CD8-positive, alpha-beta T cell (primary cell): ENCODE measurements at regions of chr14 and their contacts with region 1.

Region 1: DNA sequence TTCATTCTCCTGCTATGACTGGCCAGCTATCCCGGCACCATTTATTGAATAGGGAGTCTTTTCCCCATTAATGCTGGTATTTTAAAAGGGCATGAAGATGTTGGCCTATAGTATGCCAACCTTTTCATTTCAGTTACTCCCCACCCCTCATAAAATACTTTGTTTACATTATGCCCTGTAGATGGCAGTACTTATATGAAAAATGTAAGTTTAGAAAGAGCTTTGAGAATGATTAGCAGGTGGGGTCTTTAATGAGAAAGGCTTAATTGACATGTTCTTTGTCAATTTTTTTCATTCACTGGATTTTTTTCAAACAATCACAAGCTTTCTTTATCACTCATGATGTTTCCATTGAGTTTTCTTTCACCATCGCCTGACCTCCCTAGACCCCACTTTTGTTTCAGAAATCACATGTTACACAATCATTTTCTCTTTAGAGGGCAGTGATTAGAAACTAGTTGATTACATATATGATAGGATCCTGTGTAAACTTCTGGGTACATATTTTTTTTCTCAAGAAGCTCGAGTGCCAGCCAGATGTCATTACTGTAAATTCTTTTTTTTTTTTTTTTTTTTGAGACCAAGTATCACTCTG is 62.6 kb upstream of the PSMA6 start:
- DNase-seq: peak in 2 of 9 experiments; percentile 32 to 59
- ATAC-seq: peak; percentile 58
- H3K4me3 ChIP-seq: no peak overlapping the region
- H3K4me3 Mint-ChIP-seq: no peak overlapping the region
- H3K27ac ChIP-seq: no peak overlapping the region
- H3K27ac Mint-ChIP-seq: no peak overlapping the region
- H3K4me1 ChIP-seq: peaks cover 7% of the 10 kb centered on the region
- H3K4me1 Mint-ChIP-seq: peaks cover 19% of the 10 kb centered on the region
- H3K27me3 ChIP-seq: no peaks in the 10 kb centered on the region
- H3K27me3 Mint-ChIP-seq: no peaks in the 10 kb centered on the region
- CTCF ChIP-seq: peak; percentile 45

Region 2: DNA sequence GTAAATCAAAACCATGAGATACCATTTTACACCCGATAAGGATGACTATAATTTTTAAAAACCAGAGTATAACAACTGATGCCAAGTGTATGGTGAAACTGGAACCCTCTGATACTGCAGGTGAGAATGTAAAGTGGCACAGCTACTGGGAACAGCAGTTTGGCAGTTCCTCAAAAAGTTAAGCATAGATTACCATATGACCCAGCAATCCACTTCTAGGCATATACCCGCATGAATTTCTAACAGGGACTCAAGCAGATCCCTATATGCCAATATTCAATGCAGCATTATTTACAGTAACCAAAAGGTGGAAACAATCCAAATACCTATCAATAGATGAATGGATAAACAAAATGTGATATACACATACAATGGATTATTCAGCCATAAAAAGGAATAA is 411.8 kb before region 1 on chr14:
- CTCF ChIA-PET with region 1: no interaction called
- POLR2A ChIA-PET with region 1: no interaction called
- intact Hi-C with region 1: no loop called
- DNase-seq: no peak
- ATAC-seq: no peak
- H3K4me3 ChIP-seq: no peak overlapping the region
- H3K4me3 Mint-ChIP-seq: no peak overlapping the region
- H3K27ac ChIP-seq: no peak overlapping the region
- H3K27ac Mint-ChIP-seq: no peak overlapping the region
- H3K4me1 ChIP-seq: no peaks in the 10 kb centered on the region
- H3K4me1 Mint-ChIP-seq: peaks cover 12% of the 10 kb centered on the region
- H3K27me3 ChIP-seq: no peaks in the 10 kb centered on the region
- H3K27me3 Mint-ChIP-seq: no peaks in the 10 kb centered on the region
- CTCF ChIP-seq: no peak

Region 3: GRCh38 chr14:35140718-35141581 is 88.6 kb before region 1 on chr14:
- CTCF ChIA-PET with region 1: interaction called, 11 read pairs
- POLR2A ChIA-PET with region 1: no interaction called
- intact Hi-C with region 1: loop called (anchors 2 to 5 kb)
- DNase-seq: peak in 2 of 9 experiments; percentile 40 to 44
- ATAC-seq: peak; percentile 67
- H3K4me3 ChIP-seq: no peak overlapping the region
- H3K4me3 Mint-ChIP-seq: no peak overlapping the region
- H3K27ac ChIP-seq: no peak overlapping the region
- H3K27ac Mint-ChIP-seq: peak overlapping the region; percentile 67
- H3K4me1 ChIP-seq: no peaks in the 10 kb centered on the region
- H3K4me1 Mint-ChIP-seq: peaks cover 19% of the 10 kb centered on the region
- H3K27me3 ChIP-seq: no peaks in the 10 kb centered on the region
- H3K27me3 Mint-ChIP-seq: no peaks in the 10 kb centered on the region
- CTCF ChIP-seq: peak; percentile 83

Region 4: GRCh38 chr14:35161231-35161630 is 68.4 kb before region 1 on chr14:
- CTCF ChIA-PET with region 1: no interaction called
- POLR2A ChIA-PET with region 1: no interaction called
- intact Hi-C with region 1: no loop called
- DNase-seq: peak in 4 of 9 experiments; percentile 13 to 78 (median 47)
- ATAC-seq: peak; percentile 62
- H3K4me3 ChIP-seq: no peak overlapping the region
- H3K4me3 Mint-ChIP-seq: no peak overlapping the region
- H3K27ac ChIP-seq: no peak overlapping the region
- H3K27ac Mint-ChIP-seq: no peak overlapping the region
- H3K4me1 ChIP-seq: peaks cover 5% of the 10 kb centered on the region
- H3K4me1 Mint-ChIP-seq: peaks cover 34% of the 10 kb centered on the region
- H3K27me3 ChIP-seq: no peaks in the 10 kb centered on the region
- H3K27me3 Mint-ChIP-seq: no peaks in the 10 kb centered on the region
- CTCF ChIP-seq: no peak